Activated CD4-positive, alpha-beta T cell treated with anti-CD3 and anti-CD28 coated beads for 36 hours (primary cell): ENCODE measurements at regions of chr7 and their contacts with region 1.

Region 1: GRCh38 chr7:105691733-105692564 is 110.7 kb upstream of the EFCAB10 start:
- DNase-seq: peak; percentile 71
- ATAC-seq: peak; percentile 53
- H3K4me3 Mint-ChIP-seq: peak overlapping the region; percentile 76
- H3K27ac Mint-ChIP-seq: peak overlapping the region; percentile 93
- H3K4me1 Mint-ChIP-seq: peaks cover 43% of the 10 kb centered on the region
- H3K27me3 Mint-ChIP-seq: no peaks in the 10 kb centered on the region

Region 2: DNA sequence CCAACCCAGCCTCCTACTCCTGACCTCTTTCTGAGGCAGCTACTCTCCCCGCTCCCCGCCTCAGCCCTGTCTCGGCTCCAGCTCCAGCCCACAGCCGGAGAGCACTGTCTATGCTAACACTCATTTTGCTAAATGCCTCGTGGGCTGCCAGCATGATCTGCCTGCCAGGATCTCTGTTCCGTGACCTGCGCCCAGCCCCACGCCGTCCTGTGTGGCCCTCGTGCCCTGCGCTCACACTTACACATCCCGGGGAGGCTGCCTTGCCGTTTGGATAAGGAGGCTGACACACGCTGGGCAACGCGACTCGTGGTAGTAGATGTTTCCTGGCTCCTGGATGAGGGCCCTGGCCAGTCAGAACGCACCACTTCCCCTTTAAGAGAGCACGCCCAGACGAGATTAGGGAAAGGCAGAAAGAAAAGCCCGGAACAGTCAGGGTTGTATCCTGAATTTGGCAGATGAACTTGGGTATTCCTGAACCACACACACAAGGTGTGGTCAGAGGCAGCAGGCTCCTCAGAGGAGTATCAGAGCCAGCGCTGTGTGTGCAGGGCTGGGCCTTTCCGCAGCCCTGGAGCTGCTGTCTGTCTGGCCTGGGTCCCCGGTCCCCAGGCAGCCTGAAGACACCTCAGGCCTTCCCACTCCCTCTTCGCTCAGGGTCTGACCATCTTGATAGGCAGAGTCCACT is 13.0 kb before region 1 on chr7:
- CTCF ChIA-PET with region 1: interaction called, 11 read pairs
- POLR2A ChIA-PET with region 1: interaction called, 5 read pairs
- intact Hi-C with region 1: loop called (anchors 1 kb)
- DNase-seq: peak; percentile 62
- ATAC-seq: peak; percentile 21
- H3K4me3 Mint-ChIP-seq: peak overlapping the region; percentile 83
- H3K27ac Mint-ChIP-seq: peak overlapping the region; percentile 93
- H3K4me1 Mint-ChIP-seq: peaks cover 63% of the 10 kb centered on the region
- H3K27me3 Mint-ChIP-seq: no peaks in the 10 kb centered on the region

Region 3: GRCh38 chr7:105715528-105715927 is 23.6 kb after region 1 on chr7:
- CTCF ChIA-PET with region 1: interaction called, 3 read pairs
- POLR2A ChIA-PET with region 1: no interaction called
- intact Hi-C with region 1: loop called in 1 of 2 experiments (anchors 1 kb)
- DNase-seq: peak; percentile 57
- ATAC-seq: peak; percentile 95
- H3K4me3 Mint-ChIP-seq: no peak overlapping the region
- H3K27ac Mint-ChIP-seq: no peak overlapping the region
- H3K4me1 Mint-ChIP-seq: peaks cover 10% of the 10 kb centered on the region
- H3K27me3 Mint-ChIP-seq: no peaks in the 10 kb centered on the region